ENCODE measurements at regions of chr10 and their contacts with region 1.

Region 1: GRCh38 chr10:71396084-71396720 is 518 bp upstream of the CDH23 start:
- DNase-seq: no peak
- H3K4me3 ChIP-seq: peak overlapping the region; percentile 70 to 85 (median 74)
- H3K27ac ChIP-seq: peak overlapping the region; percentile 77 to 86 (median 79)
- H3K4me1 ChIP-seq: peaks cover 20 to 32% (median 26%) of the 10 kb centered on the region in 4 donors
- H3K27me3 ChIP-seq: peaks cover 0 to 34% (median 0%) of the 10 kb centered on the region in 4 donors
- CTCF ChIP-seq: peak; percentile 75 to 82 (median 82)
- EP300 ChIP-seq: no peak
- POLR2A ChIP-seq: no peak

Region 2: DNA sequence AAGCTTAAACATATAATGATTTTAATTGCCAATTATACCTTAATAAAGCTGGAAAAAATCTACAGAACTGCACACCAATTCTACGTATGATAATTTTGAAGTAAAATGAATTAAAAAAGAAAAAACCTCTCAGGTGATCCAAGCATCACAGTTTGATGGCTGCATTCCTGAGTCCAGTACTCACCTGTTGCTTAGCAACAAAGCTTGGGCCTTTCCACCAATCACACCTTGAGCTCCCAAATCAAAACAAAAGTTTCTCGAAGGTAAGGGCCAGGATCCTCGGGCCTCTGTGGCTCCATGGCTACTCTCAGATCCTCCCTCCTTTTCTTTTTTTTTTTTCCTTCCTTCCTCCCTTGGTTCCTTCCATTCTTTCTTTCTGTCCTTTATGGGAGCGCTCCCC is 370.7 kb before region 1 on chr10:
- intact Hi-C with region 1: no loop called
- DNase-seq: no peak
- H3K4me3 ChIP-seq: no peak overlapping the region
- H3K27ac ChIP-seq: no peak overlapping the region
- H3K4me1 ChIP-seq: no peaks in the 10 kb centered on the region
- H3K27me3 ChIP-seq: no peaks in the 10 kb centered on the region
- CTCF ChIP-seq: no peak
- EP300 ChIP-seq: no peak
- POLR2A ChIP-seq: no peak

Region 3: GRCh38 chr10:71473671-71474599 is 77.7 kb after region 1 on chr10:
- intact Hi-C with region 1: loop called (anchors 5 kb)
- DNase-seq: no peak
- H3K4me3 ChIP-seq: no peak overlapping the region
- H3K27ac ChIP-seq: no peak overlapping the region
- H3K4me1 ChIP-seq: peaks cover 48 to 58% (median 54%) of the 10 kb centered on the region in 4 donors
- H3K27me3 ChIP-seq: no peaks in the 10 kb centered on the region
- CTCF ChIP-seq: no peak
- EP300 ChIP-seq: no peak
- POLR2A ChIP-seq: no peak

Region 4: DNA sequence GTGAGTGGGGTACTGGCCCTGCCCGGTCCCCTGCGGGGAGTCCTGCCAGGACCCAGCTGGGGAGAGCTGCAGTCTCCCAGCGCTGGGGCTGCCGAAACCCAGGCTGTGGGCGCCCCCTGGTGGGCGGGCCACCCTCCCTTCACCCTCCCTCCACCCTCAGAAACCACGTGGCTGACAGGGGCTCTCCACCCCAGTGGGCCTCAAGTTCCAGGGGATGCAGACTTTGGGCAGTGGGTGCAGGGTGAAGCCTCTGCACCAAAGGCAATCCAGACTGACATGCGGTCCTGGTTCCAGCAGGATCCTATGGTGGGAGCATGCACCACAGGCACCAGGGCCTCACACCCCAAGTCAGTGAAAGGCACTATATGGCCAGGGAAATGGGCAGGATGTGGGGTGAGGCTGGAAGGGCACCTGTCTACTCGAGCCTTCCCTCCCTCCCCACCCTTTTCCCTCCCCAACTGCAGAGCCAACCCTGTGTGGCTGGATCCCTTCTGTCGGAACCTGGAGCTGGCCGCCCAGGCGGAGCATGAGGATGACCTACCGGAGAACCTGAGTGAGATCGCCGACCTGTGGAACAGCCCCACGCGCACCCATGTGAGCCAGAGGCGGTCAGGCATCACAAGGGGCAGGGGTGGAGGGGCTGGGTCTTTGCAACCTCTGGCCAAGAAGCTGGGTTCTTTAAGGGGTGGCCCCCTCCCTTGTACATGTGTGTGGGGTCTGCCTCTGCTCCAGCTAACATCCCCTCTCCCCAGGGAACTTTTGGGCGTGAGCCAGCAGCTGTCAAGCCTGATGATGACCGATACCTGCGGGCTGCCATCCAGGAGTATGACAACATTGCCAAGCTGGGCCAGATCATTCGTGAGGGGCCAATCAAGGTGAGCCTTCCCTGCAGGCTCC is 416.1 kb after region 1 on chr10:
- intact Hi-C with region 1: loop called (anchors 5 kb)
- DNase-seq: no peak
- H3K4me3 ChIP-seq: no peak overlapping the region
- H3K27ac ChIP-seq: no peak overlapping the region
- H3K4me1 ChIP-seq: peaks cover 21 to 41% (median 31%) of the 10 kb centered on the region in 4 donors
- H3K27me3 ChIP-seq: no peaks in the 10 kb centered on the region
- CTCF ChIP-seq: peak; percentile 73 to 95 (median 85)
- EP300 ChIP-seq: no peak
- POLR2A ChIP-seq: no peak

Measured in esophagus muscularis mucosa (tissue), 4 donors.